ENCODE measurements at regions of chr7 and their contacts with region 1.

Region 1: DNA sequence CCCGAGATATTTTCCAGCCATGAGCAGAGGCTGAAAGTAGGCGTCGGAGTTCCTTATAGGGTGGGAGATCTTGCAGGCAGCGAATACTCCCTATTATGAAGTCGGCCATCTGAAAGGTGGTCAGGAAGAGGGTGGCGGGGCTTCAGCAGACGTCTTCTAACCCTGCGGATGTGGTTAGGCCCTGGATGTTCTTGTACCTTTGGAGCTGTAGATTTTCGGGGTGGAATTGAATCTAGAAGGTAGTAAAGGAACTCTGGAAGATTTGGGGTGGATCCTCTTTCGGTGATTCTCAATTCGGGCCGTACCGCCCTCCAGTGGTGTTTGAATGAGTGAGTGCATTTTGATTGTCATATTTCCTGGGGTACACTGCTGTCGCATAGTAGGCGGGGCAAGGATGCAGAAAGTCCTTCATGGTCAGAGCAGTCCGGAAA is 635 bp downstream of the NUP205 start:
- DNase-seq: peak; percentile 81
- H3K4me3 ChIP-seq: peak overlapping the region; percentile 62 to 100 (median 84)
- H3K27ac ChIP-seq: peak overlapping the region; percentile 90 to 96 (median 93)
- H3K4me1 ChIP-seq: peaks cover 13 to 44% (median 32%) of the 10 kb centered on the region in 6 donors
- H3K27me3 ChIP-seq: no peaks in the 10 kb centered on the region
- CTCF ChIP-seq: peak in 10 of 11 experiments; percentile 21 to 66 (median 50)
- POLR2A ChIP-seq: no peak

Region 2: DNA sequence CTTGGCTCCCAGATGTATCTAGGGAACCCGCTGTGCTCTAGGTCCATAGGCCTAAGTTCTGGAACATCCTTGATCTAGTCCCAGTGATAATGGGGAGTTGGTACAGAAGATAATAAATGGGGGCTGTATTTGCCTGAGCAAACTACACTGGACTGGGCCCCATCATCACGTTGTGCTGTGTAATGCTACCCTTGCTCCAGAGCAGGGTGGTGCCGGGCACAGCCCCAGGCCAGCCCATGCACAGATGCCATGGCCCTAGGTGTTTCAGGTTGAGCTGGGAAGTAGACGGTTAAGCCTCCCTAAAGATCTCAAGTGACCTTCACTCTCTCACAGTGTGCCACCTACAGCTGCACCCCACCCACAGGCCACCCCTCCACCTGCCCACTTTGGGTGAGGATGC is 271.5 kb before region 1 on chr7:
- intact Hi-C with region 1: loop called (anchors 5 kb)
- DNase-seq: no peak
- H3K4me3 ChIP-seq: no peak overlapping the region
- H3K27ac ChIP-seq: no peak overlapping the region
- H3K4me1 ChIP-seq: peaks cover 0 to under 1% (median under 1%) of the 10 kb centered on the region in 6 donors
- H3K27me3 ChIP-seq: no peaks in the 10 kb centered on the region
- CTCF ChIP-seq: no peak
- POLR2A ChIP-seq: no peak

Region 3: GRCh38 chr7:135509903-135510602 is 48.3 kb before region 1 on chr7 and contains the start of gene CNOT4:
- intact Hi-C with region 1: loop called (anchors 5 kb)
- DNase-seq: peak; percentile 99
- H3K4me3 ChIP-seq: peak within 1 kb of the TSS; percentile 65 to 93 (median 82)
- H3K27ac ChIP-seq: peak within 1 kb of the TSS; percentile 88 to 96 (median 93)
- H3K4me1 ChIP-seq: peaks cover 23 to 58% (median 41%) of the 10 kb centered on the region in 6 donors
- H3K27me3 ChIP-seq: no peaks in the 10 kb centered on the region
- CTCF ChIP-seq: peak in 1 of 11 experiments; percentile 37
- POLR2A ChIP-seq: no peak
- total RNA-seq, gene CNOT4: 22.4 to 36.9 (median 28.6) TPM

Measured in spleen (tissue), 13 donors.